ENCODE measurements at regions of chrX and their contacts with region 1.

Region 1: DNA sequence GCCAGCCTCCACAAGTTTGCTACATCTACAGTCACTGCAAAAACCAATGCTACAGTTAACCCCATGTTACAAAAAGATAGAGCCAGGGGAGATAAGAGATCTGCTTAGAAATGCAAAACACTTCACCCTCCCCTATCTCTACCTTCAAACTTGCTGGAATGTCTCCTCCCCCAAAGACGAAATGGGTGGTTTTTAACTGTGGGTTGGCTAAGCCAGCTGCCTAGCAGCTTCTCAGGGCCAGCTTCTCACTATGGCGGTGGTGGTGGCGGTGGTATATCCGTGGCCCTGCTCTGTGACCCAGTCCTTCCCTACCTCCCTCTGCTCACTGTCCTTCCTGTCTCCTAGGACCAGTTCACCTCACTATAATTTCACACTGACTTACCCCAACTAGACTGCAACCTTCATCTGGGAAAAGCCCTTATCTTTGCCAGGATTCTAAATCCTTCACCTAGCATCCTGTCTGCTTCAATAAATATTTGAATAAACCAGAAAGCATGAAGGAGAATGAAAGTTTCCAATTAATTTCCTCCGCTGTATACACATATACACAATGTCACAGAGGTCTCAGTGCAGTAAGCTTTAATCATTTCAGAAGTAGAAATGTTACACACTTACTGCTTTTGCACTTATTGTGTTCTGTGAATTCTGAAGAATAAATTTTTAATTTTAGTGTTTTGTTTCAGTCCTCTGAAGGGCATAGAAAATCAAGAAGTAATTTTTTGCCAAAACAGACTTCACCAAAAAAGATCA is 46.3 kb downstream of the SH3KBP1 start:
- DNase-seq: peak in 10 of 14 experiments; percentile 2 to 78 (median 25)
- ATAC-seq: peak; percentile 75
- H3K4me3 ChIP-seq: no peak overlapping the region
- H3K4me3 Mint-ChIP-seq: peak overlapping the region; percentile 68
- H3K27ac ChIP-seq: peak overlapping the region; percentile 30 to 34
- H3K27ac Mint-ChIP-seq: peak overlapping the region; percentile 87
- H3K4me1 ChIP-seq: peaks cover 46% of the 10 kb centered on the region
- H3K4me1 Mint-ChIP-seq: peaks cover 69% of the 10 kb centered on the region
- H3K27me3 ChIP-seq: no peaks in the 10 kb centered on the region
- H3K27me3 Mint-ChIP-seq: no peaks in the 10 kb centered on the region
- CTCF ChIP-seq: no peak

Region 2: DNA sequence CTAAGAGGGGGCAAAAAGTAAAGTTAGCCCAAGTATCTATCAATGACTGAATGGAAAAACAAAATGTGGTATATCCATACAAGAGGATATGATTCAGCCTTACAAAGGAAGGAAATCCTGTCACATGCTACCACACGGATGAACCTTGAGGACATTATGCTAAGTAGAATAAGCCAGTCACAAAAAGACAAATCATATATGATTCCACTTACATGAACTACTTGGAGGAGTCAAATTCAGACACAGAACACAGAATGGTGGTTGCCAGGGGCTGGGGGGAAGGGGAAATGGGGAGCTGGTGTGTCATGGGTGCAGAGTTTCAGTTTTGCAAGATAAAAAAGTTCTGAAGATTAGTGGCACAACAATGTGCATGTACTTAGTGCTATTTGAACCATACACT is 55.4 kb before region 1 on chrX:
- CTCF ChIA-PET with region 1: no interaction called
- POLR2A ChIA-PET with region 1: no interaction called
- intact Hi-C with region 1: no loop called
- DNase-seq: peak in 3 of 14 experiments; percentile 25 to 54 (median 27)
- ATAC-seq: peak; percentile 51
- H3K4me3 ChIP-seq: no peak overlapping the region
- H3K4me3 Mint-ChIP-seq: peak overlapping the region; percentile 54
- H3K27ac ChIP-seq: no peak overlapping the region
- H3K27ac Mint-ChIP-seq: peak overlapping the region; percentile 84
- H3K4me1 ChIP-seq: peaks cover 58% of the 10 kb centered on the region
- H3K4me1 Mint-ChIP-seq: peaks cover 73% of the 10 kb centered on the region
- H3K27me3 ChIP-seq: no peaks in the 10 kb centered on the region
- H3K27me3 Mint-ChIP-seq: no peaks in the 10 kb centered on the region
- CTCF ChIP-seq: no peak

Region 3: DNA sequence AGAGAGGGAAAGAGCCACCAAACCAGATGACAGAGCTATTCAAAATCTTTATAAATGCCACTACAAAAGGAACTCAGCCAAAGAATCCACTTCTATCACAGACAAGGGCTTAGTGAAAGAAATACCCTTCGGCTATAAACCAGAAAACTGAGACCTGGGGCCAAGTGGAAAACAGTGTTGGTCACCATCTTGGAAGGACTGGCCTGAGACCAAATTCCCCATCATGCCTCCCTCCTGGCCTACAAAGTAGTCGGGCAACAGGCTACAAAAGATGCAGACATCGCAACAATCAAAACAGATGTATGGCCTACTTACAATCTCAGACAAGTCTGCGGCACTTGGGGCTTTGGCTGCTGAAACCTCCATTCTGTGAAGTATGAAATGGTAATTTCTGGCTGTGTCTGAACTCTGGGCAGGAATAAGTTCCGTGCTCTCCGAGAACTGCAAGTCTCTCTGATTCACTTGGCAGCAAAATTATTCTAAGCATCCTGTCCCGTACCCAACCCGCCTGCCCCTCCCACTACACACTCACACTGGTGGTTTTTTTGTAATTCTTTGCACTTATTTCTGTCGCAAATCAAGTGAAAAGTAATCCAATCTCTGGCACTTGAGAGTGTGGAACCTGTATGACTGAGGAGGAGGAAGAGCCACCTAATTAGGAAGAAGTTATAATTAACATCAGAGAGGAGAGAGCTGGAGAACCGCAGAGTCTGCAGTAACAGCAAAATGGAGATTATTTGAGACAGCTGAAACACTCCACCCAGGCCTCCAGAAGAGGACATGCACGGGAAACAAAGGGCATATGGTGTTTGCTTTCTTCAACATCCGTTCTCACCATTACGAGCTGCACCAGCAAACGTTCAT is 41.5 kb before region 1 on chrX:
- CTCF ChIA-PET with region 1: interaction called, 4 read pairs
- POLR2A ChIA-PET with region 1: interaction called, 28 read pairs
- intact Hi-C with region 1: loop called (anchors 5 kb)
- DNase-seq: peak in 13 of 14 experiments; percentile 21 to 79 (median 48)
- ATAC-seq: peak; percentile 82
- H3K4me3 ChIP-seq: peak overlapping the region; percentile 75
- H3K4me3 Mint-ChIP-seq: peak overlapping the region; percentile 84
- H3K27ac ChIP-seq: peak overlapping the region; percentile 72 to 74
- H3K27ac Mint-ChIP-seq: peak overlapping the region; percentile 90
- H3K4me1 ChIP-seq: peaks cover 64% of the 10 kb centered on the region
- H3K4me1 Mint-ChIP-seq: peaks cover 74% of the 10 kb centered on the region
- H3K27me3 ChIP-seq: no peaks in the 10 kb centered on the region
- H3K27me3 Mint-ChIP-seq: no peaks in the 10 kb centered on the region
- CTCF ChIP-seq: no peak

Region 4: GRCh38 chrX:19805046-19805690 is 35.9 kb before region 1 on chrX:
- CTCF ChIA-PET with region 1: interaction called, 4 read pairs
- POLR2A ChIA-PET with region 1: interaction called, 28 read pairs
- intact Hi-C with region 1: loop called in 1 of 2 experiments (anchors 5 kb)
- DNase-seq: peak in 4 of 14 experiments; percentile 17 to 69 (median 60)
- ATAC-seq: peak; percentile 82
- H3K4me3 ChIP-seq: peak overlapping the region; percentile 36
- H3K4me3 Mint-ChIP-seq: peak overlapping the region; percentile 78
- H3K27ac ChIP-seq: peak overlapping the region; percentile 41 to 48
- H3K27ac Mint-ChIP-seq: peak overlapping the region; percentile 94
- H3K4me1 ChIP-seq: peaks cover 48% of the 10 kb centered on the region
- H3K4me1 Mint-ChIP-seq: peaks cover 62% of the 10 kb centered on the region
- H3K27me3 ChIP-seq: no peaks in the 10 kb centered on the region
- H3K27me3 Mint-ChIP-seq: no peaks in the 10 kb centered on the region
- CTCF ChIP-seq: no peak

Region 5: DNA sequence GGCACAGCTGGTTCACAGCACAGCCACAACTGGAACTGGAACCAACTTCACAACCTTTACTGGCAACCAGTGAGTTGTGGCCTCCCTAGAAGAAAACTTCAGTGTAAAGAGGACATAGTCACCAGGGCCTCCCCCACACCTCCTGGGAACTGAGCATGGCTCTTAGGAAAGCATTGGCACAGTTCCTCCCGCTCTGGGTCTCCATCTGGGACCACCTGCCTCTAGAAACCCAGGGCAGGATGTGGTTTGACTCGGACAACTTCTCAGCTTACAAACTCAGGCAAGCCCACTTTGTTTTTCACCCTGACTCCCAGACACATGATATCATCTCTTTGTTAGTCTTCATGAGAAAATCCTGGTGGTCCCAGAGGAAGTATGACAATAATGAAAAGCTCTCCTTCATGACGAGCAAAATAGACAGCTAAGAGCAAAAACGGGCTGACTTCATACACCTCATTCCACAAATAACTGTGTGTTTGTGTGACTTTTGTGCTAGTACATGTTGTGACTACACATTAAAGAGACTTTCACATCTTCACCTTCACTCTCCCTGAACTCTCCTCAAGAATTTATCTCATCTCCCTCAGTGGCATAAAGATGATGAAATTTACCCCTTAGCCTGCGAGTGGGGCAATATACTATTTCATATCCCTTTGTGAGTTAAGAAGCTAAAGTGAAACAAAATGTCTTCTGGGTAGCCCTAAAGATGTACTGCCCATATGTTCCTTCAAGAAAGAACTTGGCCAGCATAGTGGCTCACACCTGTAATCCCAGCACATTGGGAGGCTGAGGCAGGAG is 29.1 kb before region 1 on chrX:
- CTCF ChIA-PET with region 1: no interaction called
- POLR2A ChIA-PET with region 1: interaction called, 10 read pairs
- intact Hi-C with region 1: no loop called
- DNase-seq: peak in 1 of 14 experiments; percentile 15
- ATAC-seq: peak; percentile 24
- H3K4me3 ChIP-seq: no peak overlapping the region
- H3K4me3 Mint-ChIP-seq: no peak overlapping the region
- H3K27ac ChIP-seq: peak overlapping the region in 1 of 2 donors; percentile 40
- H3K27ac Mint-ChIP-seq: peak overlapping the region; percentile 83
- H3K4me1 ChIP-seq: peaks cover 29% of the 10 kb centered on the region
- H3K4me1 Mint-ChIP-seq: peaks cover 65% of the 10 kb centered on the region
- H3K27me3 ChIP-seq: no peaks in the 10 kb centered on the region
- H3K27me3 Mint-ChIP-seq: no peaks in the 10 kb centered on the region
- CTCF ChIP-seq: no peak

Region 6: GRCh38 chrX:19824603-19825002 is 16.5 kb before region 1 on chrX:
- CTCF ChIA-PET with region 1: interaction called, 5 read pairs
- POLR2A ChIA-PET with region 1: interaction called, 20 read pairs
- intact Hi-C with region 1: no loop called
- DNase-seq: peak in 4 of 14 experiments; percentile 39 to 56 (median 44)
- ATAC-seq: peak; percentile 71
- H3K4me3 ChIP-seq: no peak overlapping the region
- H3K4me3 Mint-ChIP-seq: no peak overlapping the region
- H3K27ac ChIP-seq: no peak overlapping the region
- H3K27ac Mint-ChIP-seq: peak overlapping the region; percentile 69
- H3K4me1 ChIP-seq: peaks cover 21% of the 10 kb centered on the region
- H3K4me1 Mint-ChIP-seq: peaks cover 46% of the 10 kb centered on the region
- H3K27me3 ChIP-seq: no peaks in the 10 kb centered on the region
- H3K27me3 Mint-ChIP-seq: no peaks in the 10 kb centered on the region
- CTCF ChIP-seq: no peak

Region 7: GRCh38 chrX:19855700-19856381 is 14.8 kb after region 1 on chrX:
- CTCF ChIA-PET with region 1: interaction called, 4 read pairs
- POLR2A ChIA-PET with region 1: interaction called, 35 read pairs
- intact Hi-C with region 1: no loop called
- DNase-seq: no peak
- ATAC-seq: no peak
- H3K4me3 ChIP-seq: no peak overlapping the region
- H3K4me3 Mint-ChIP-seq: peak overlapping the region; percentile 68
- H3K27ac ChIP-seq: peak overlapping the region in 1 of 2 donors; percentile 29
- H3K27ac Mint-ChIP-seq: peak overlapping the region; percentile 83
- H3K4me1 ChIP-seq: peaks cover 16% of the 10 kb centered on the region
- H3K4me1 Mint-ChIP-seq: peaks cover 35% of the 10 kb centered on the region
- H3K27me3 ChIP-seq: no peaks in the 10 kb centered on the region
- H3K27me3 Mint-ChIP-seq: no peaks in the 10 kb centered on the region
- CTCF ChIP-seq: no peak

Region 8: GRCh38 chrX:19865567-19866363 is 24.7 kb after region 1 on chrX:
- CTCF ChIA-PET with region 1: no interaction called
- POLR2A ChIA-PET with region 1: interaction called, 5 read pairs
- intact Hi-C with region 1: loop called in 1 of 2 experiments (anchors 2 kb)
- DNase-seq: peak in 3 of 14 experiments; percentile 25 to 51 (median 47)
- ATAC-seq: peak; percentile 62
- H3K4me3 ChIP-seq: no peak overlapping the region
- H3K4me3 Mint-ChIP-seq: peak overlapping the region; percentile 18
- H3K27ac ChIP-seq: no peak overlapping the region
- H3K27ac Mint-ChIP-seq: peak overlapping the region; percentile 68
- H3K4me1 ChIP-seq: peaks cover 46% of the 10 kb centered on the region
- H3K4me1 Mint-ChIP-seq: peaks cover 78% of the 10 kb centered on the region
- H3K27me3 ChIP-seq: no peaks in the 10 kb centered on the region
- H3K27me3 Mint-ChIP-seq: no peaks in the 10 kb centered on the region
- CTCF ChIP-seq: no peak

Measured in CD4-positive, alpha-beta T cell (primary cell).